MCF 10A (cell line): ENCODE measurements at regions of chr9 and their contacts with region 1.

Region 1: GRCh38 chr9:136244122-136244968 is 1.3 kb downstream of the QSOX2 start:
- DNase-seq: no peak
- H3K4me3 Mint-ChIP-seq: peak overlapping the region; percentile 93
- H3K27ac Mint-ChIP-seq: peak overlapping the region; percentile 86
- H3K4me1 Mint-ChIP-seq: peaks cover 22% of the 10 kb centered on the region
- H3K27me3 Mint-ChIP-seq: no peaks in the 10 kb centered on the region
- CTCF ChIP-seq: no peak

Region 2: GRCh38 chr9:136170006-136170901 is 74.1 kb before region 1 on chr9:
- CTCF ChIA-PET with region 1: no interaction called
- POLR2A ChIA-PET with region 1: no interaction called
- intact Hi-C with region 1: loop called (anchors 1 kb)
- DNase-seq: peak; percentile 36
- H3K4me3 Mint-ChIP-seq: no peak overlapping the region
- H3K27ac Mint-ChIP-seq: no peak overlapping the region
- H3K4me1 Mint-ChIP-seq: no peaks in the 10 kb centered on the region
- H3K27me3 Mint-ChIP-seq: peaks cover 36% of the 10 kb centered on the region
- CTCF ChIP-seq: peak; percentile 82

Region 3: GRCh38 chr9:136185596-136186366 is 58.6 kb before region 1 on chr9:
- CTCF ChIA-PET with region 1: no interaction called
- POLR2A ChIA-PET with region 1: no interaction called
- intact Hi-C with region 1: no loop called
- DNase-seq: no peak
- H3K4me3 Mint-ChIP-seq: no peak overlapping the region
- H3K27ac Mint-ChIP-seq: no peak overlapping the region
- H3K4me1 Mint-ChIP-seq: no peaks in the 10 kb centered on the region
- H3K27me3 Mint-ChIP-seq: peaks cover 34% of the 10 kb centered on the region
- CTCF ChIP-seq: no peak

Region 4: DNA sequence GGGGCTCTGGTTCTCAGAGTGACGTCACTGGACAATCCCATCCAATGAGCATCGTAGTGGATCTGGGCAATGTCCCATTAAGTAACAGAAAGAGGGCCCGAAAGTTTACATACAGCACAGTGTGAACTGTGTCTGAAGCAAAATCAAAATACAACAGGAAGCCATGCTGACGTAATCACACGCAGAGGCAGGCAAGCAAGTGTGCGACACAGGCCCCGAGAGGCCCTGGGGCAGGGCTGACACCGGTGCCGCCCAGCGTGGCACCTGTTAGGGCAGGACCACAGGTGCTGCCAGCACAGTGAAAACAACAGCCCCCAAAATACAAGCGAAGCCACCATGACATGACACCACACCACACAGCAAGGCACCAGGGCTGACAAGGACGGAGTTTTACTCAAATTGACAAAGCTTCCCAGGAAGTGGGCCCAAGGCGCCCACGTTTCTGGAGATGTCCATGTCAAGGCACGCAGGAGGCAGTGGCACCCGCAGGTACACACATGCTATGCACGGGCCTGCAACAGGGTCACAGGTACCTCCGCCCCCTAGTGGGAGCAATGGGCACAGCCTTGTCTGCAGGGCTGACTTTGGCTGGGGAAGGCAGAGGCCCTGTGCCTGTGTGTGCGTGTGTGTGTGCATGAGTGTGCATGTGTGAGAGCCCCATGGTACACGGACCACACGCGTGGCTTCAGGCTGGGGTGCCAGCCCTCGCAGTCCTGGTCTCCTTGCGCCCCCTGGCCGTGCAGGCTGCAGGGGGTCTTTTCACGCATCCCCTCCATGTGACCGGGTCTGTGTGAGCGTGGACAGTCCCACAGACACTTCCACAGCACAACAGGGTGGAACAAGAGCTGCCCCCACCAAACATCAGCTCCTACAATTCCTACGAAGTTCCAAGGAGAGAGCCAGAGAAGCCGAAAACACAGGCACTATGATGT is 18.3 kb before region 1 on chr9:
- CTCF ChIA-PET with region 1: interaction called, 5 read pairs
- POLR2A ChIA-PET with region 1: interaction called, 4 read pairs
- intact Hi-C with region 1: loop called (anchors 1 kb)
- DNase-seq: peak; percentile 65
- H3K4me3 Mint-ChIP-seq: no peak overlapping the region
- H3K27ac Mint-ChIP-seq: no peak overlapping the region
- H3K4me1 Mint-ChIP-seq: peaks cover 14% of the 10 kb centered on the region
- H3K27me3 Mint-ChIP-seq: no peaks in the 10 kb centered on the region
- CTCF ChIP-seq: peak; percentile 85

Region 5: GRCh38 chr9:136395345-136396218 is 151.2 kb after region 1 on chr9:
- CTCF ChIA-PET with region 1: no interaction called
- POLR2A ChIA-PET with region 1: no interaction called
- intact Hi-C with region 1: no loop called
- DNase-seq: no peak
- H3K4me3 Mint-ChIP-seq: no peak overlapping the region
- H3K27ac Mint-ChIP-seq: no peak overlapping the region
- H3K4me1 Mint-ChIP-seq: no peaks in the 10 kb centered on the region
- H3K27me3 Mint-ChIP-seq: no peaks in the 10 kb centered on the region
- CTCF ChIP-seq: no peak